ENCODE measurements at regions of chr7 and their contacts with region 1.

Region 1: GRCh38 chr7:116354546-116355408 is 144.4 kb downstream of the TES start:
- DNase-seq: peak; percentile 92 to 100
- H3K4me3 ChIP-seq: peak overlapping the region; percentile 50; the same call in 1 of the 2 replicates
- H3K27ac ChIP-seq: peak overlapping the region; percentile 93
- H3K4me1 ChIP-seq: peaks cover 62% of the 10 kb centered on the region
- H3K27me3 ChIP-seq: no peaks in the 10 kb centered on the region
- CTCF ChIP-seq: no peak

Region 2: GRCh38 chr7:116218051-116218645 is 136.6 kb before region 1 on chr7:
- CTCF ChIA-PET with region 1: no interaction called
- POLR2A ChIA-PET with region 1: no interaction called
- intact Hi-C with region 1: loop called (anchors 1 kb)
- DNase-seq: peak; percentile 88 to 99
- H3K4me3 ChIP-seq: peak overlapping the region; percentile 36; the same call in 1 of the 2 replicates
- H3K27ac ChIP-seq: peak overlapping the region; percentile 88
- H3K4me1 ChIP-seq: peaks cover 73% of the 10 kb centered on the region
- H3K27me3 ChIP-seq: no peaks in the 10 kb centered on the region
- CTCF ChIP-seq: no peak

Region 3: GRCh38 chr7:116327752-116328151 is 27.0 kb before region 1 on chr7:
- CTCF ChIA-PET with region 1: no interaction called
- POLR2A ChIA-PET with region 1: interaction called, 11 read pairs
- intact Hi-C with region 1: no loop called
- DNase-seq: no peak
- H3K4me3 ChIP-seq: no peak overlapping the region
- H3K27ac ChIP-seq: no peak overlapping the region
- H3K4me1 ChIP-seq: no peaks in the 10 kb centered on the region
- H3K27me3 ChIP-seq: no peaks in the 10 kb centered on the region
- CTCF ChIP-seq: no peak

Region 4: GRCh38 chr7:116434820-116435341 is 80.1 kb after region 1 on chr7:
- CTCF ChIA-PET with region 1: no interaction called
- POLR2A ChIA-PET with region 1: interaction called, 5 read pairs
- intact Hi-C with region 1: loop called (anchors 2 kb)
- DNase-seq: no peak
- H3K4me3 ChIP-seq: no peak overlapping the region
- H3K27ac ChIP-seq: peak overlapping the region; percentile 35
- H3K4me1 ChIP-seq: peaks cover 22% of the 10 kb centered on the region
- H3K27me3 ChIP-seq: no peaks in the 10 kb centered on the region
- CTCF ChIP-seq: no peak

Region 5: GRCh38 chr7:116499168-116500077 is 144.6 kb after region 1 on chr7 and contains the start of gene CAV2:
- CTCF ChIA-PET with region 1: no interaction called
- POLR2A ChIA-PET with region 1: no interaction called
- intact Hi-C with region 1: loop called (anchors 1 kb)
- DNase-seq: peak; percentile 88 to 95
- H3K4me3 ChIP-seq: peak within 1 kb of the TSS; percentile 89
- H3K27ac ChIP-seq: peak within 1 kb of the TSS; percentile 81
- H3K4me1 ChIP-seq: peaks cover 35% of the 10 kb centered on the region
- H3K27me3 ChIP-seq: no peaks in the 10 kb centered on the region
- CTCF ChIP-seq: no peak
- total RNA-seq, gene CAV2: 260 and 296 TPM in 2 replicates

Region 6: DNA sequence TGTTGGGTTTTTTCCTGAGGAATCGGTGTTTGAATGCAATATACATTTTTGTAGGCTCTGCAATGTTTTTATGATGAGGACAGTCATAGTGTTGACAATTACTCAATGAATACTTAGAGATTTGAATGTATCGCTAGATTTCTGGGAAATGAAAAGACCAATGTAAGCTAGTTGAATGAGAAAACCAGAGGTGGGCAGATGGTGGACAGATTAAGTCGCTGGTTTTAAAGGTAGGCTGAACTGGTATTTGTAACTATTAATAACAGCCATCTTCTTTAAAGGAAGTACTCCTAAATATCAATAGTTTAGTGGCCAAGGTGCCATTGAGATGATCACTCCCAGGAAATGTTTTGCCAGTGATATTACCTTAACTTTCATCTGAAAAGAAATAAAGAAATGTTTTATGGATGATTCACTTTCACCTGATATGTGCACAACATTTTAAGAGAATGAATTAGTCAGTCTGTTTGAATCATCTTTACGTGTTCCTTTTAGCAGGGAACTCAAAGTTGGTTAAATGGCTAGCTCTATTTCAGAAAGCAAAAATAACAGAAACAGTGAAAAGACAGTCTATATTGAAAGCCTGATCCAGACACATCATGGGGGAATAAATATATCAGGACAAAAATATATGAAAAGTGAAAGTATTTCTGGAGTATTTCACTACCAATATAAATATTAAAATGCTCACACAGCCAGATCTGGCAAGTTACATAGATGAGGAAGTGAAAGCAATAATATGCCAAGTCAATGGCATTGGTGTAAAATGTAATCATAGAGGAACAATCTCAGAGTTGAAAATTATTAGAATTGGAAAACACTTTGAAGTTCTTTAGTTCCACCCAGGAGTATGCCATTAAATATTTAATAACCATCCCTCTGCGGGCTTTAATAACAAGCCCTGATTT is 337.9 kb after region 1 on chr7:
- CTCF ChIA-PET with region 1: no interaction called
- POLR2A ChIA-PET with region 1: no interaction called
- intact Hi-C with region 1: loop called (anchors 5 kb)
- DNase-seq: peak in 1 of 2 experiments; percentile 89
- H3K4me3 ChIP-seq: peak overlapping the region; percentile 36; the same call in 1 of the 2 replicates
- H3K27ac ChIP-seq: peak overlapping the region; percentile 89
- H3K4me1 ChIP-seq: peaks cover 46% of the 10 kb centered on the region
- H3K27me3 ChIP-seq: no peaks in the 10 kb centered on the region
- CTCF ChIP-seq: no peak

Measured in PC-9 (cell line).